Sigmoid colon (tissue), 7 donors: ENCODE measurements at regions of chr12 and their contacts with region 1.

Region 1: DNA sequence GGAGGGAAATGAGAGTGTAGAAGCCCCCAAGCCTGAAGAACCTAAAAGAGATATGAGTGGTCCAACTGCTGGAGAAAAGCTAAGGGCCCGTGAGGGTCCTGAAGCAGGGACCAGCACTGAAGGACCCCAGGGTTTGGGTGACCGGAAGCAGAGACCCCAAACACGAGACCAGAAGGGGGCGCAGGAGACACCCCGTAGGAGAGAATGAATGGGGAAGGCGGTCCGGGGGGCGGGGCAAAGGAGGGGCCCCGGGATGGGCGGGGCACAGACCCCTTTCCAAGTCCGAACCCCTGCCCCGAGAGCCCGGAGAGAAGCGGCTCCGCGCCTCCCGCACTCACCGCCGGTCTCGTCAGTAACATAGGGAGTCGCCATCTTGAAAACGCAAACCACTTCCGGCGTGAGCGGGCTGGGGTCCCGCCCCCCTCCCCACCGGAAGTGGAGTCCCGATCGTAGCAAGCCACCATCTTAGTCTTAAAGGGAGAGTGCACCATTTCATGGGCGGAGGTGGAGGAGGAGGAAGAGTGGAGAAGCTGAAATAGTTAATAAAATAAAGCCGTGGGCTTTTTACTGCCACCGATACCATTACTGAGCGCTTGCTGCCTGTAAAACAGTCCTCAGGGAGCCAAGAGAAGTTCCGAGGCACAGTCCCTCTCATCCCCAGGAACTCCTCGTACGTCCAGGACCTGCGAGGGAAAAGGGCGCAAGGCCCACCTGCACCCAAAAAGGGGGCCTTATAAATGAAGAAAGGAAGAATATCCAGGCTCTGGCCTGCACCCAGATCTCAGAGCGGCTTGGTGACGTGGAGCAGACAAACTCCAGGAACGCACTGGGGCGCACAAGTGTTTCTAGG is 731 bp downstream of the PYM1 start:
- DNase-seq: peak; percentile 94
- H3K4me3 ChIP-seq: peak overlapping the region; percentile 53 to 94 (median 86)
- H3K27ac ChIP-seq: peak overlapping the region; percentile 84 to 98 (median 98)
- H3K4me1 ChIP-seq: peaks cover 0 to 48% (median 38%) of the 10 kb centered on the region in 4 donors
- H3K27me3 ChIP-seq: no peaks in the 10 kb centered on the region
- CTCF ChIP-seq: peak in 3 of 4 experiments; percentile 73 to 87 (median 80)
- EP300 ChIP-seq: no peak
- POLR2A ChIP-seq: peak in 1 of 2 donors; percentile 39

Region 2: GRCh38 chr12:55738123-55739024 is 188.6 kb before region 1 on chr12:
- intact Hi-C with region 1: loop called (anchors 5 kb)
- DNase-seq: peak; percentile 91
- H3K4me3 ChIP-seq: peak overlapping the region; percentile 39 to 62 (median 52)
- H3K27ac ChIP-seq: peak overlapping the region; percentile 78 to 83 (median 80)
- H3K4me1 ChIP-seq: peaks cover 0 to 28% (median 20%) of the 10 kb centered on the region in 4 donors
- H3K27me3 ChIP-seq: no peaks in the 10 kb centered on the region
- CTCF ChIP-seq: peak; percentile 78 to 95 (median 88)
- EP300 ChIP-seq: no peak
- POLR2A ChIP-seq: no peak

Region 3: DNA sequence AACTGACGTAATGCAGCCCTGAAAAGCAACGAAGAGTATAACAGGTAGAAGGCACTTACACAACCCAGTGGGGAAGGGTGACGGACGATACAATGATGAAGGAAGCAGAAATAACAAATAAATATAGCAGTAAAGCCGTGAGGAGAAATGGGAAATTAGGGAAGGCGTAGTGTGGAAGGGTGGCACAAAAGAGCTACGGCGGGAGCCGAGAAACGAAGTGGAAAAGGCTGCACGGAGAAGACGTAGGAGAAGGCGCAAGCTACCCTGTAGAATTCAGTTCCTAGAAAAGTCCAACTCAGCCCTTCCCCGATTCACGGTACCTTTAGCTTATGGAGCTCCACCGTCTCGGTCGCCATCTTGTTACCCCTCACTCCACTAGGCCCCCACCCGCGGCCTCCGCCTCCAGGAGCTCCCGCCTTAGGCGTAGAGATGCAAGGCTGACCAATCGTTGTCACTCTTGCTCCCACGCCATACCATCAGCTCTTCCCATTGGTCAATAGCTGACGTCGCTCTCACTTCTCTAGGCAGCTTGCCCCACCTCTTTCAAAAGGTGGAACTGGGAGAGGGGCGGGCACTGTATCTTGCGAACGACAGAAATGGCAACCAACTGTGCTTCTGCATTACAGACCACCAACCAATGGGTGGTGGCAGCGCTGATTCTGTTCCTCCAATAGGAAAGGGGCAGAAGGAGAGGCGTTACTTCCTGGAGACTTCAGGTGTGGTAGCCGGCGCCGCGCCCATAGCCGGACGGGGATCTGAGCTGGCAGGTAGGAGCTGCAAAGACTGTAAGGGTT is 109.4 kb before region 1 on chr12 and contains the starts of genes ORMDL2 and SARNP:
- intact Hi-C with region 1: loop called (anchors 2 kb)
- DNase-seq: peak; percentile 99
- H3K4me3 ChIP-seq: peak within 1 kb of the TSS; percentile 66 to 87 (median 84)
- H3K27ac ChIP-seq: peak within 1 kb of the TSS; percentile 89 to 96 (median 93)
- H3K4me1 ChIP-seq: peaks cover 0 to 43% (median 39%) of the 10 kb centered on the region in 4 donors
- H3K27me3 ChIP-seq: no peaks in the 10 kb centered on the region
- CTCF ChIP-seq: no peak
- EP300 ChIP-seq: no peak
- POLR2A ChIP-seq: peak; percentile 65 to 73
- total RNA-seq, gene ORMDL2: 9.1 to 18.1 (median 12.0) TPM
- total RNA-seq, gene SARNP: 49.0 to 81.9 (median 76.9) TPM

Region 4: GRCh38 chr12:55829967-55830600 is 96.9 kb before region 1 on chr12:
- intact Hi-C with region 1: loop called (anchors 1 kb)
- DNase-seq: peak; percentile 85
- H3K4me3 ChIP-seq: peak overlapping the region; percentile 64 to 88 (median 84)
- H3K27ac ChIP-seq: peak overlapping the region; percentile 86 to 94 (median 92)
- H3K4me1 ChIP-seq: peaks cover 0 to 54% (median 47%) of the 10 kb centered on the region in 4 donors
- H3K27me3 ChIP-seq: no peaks in the 10 kb centered on the region
- CTCF ChIP-seq: no peak
- EP300 ChIP-seq: no peak
- POLR2A ChIP-seq: no peak

Region 5: GRCh38 chr12:55966408-55967281 is 39.7 kb after region 1 on chr12 and contains the start of gene CDK2:
- intact Hi-C with region 1: loop called (anchors 2 kb)
- DNase-seq: peak; percentile 98
- H3K4me3 ChIP-seq: peak within 1 kb of the TSS; percentile 57 to 94 (median 72)
- H3K27ac ChIP-seq: peak within 1 kb of the TSS; percentile 73 to 89 (median 84)
- H3K4me1 ChIP-seq: peaks cover 0 to 21% (median 15%) of the 10 kb centered on the region in 4 donors
- H3K27me3 ChIP-seq: no peaks in the 10 kb centered on the region
- CTCF ChIP-seq: no peak
- EP300 ChIP-seq: no peak
- POLR2A ChIP-seq: peak; percentile 50 to 55
- total RNA-seq, gene CDK2: 11.4 to 27.7 (median 18.8) TPM

Region 6: DNA sequence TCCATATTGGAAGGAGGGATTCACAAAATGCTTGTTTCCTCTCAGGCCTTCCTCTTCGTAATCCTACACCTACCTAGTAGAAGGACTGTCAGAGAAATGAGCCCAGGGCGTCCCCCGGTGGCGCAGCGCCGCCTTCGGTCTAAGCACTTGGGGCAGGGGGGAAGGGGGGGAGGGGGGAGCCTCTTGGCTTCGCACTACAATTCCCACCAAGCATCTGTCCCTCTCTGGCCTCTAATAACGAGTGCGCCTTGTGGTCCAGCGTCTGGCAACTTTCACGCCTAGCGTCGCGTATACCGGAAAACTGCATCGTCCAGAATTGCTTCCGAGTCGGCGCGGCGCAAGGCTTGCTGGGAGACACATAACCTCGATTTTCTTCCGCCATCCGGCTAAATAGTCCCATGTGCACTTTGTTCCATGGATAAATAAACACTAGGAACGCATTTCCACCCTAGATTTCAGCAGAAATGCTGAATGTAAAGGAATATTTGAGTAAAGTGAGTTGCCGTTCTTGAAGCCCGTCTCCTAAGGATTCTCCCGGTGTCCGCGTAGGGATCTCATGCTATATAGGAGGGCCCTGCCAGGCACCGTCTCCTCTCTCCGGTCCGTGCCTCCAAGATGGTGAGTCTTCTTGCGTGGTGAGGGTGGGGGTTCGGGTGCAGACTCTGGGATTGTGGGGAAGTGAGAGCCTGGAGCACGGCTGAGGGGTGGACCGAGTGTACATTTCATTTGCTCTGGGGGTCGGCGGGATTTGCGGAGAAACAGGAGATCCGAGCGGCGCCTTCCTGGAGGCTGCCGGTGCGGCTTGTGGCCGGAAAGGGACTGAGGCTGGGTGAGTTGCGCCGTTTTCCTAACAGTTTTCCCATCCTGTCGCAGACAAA is 114.8 kb after region 1 on chr12 and contains the start of gene RPS26:
- intact Hi-C with region 1: loop called (anchors 2 kb)
- DNase-seq: peak; percentile 98
- H3K4me3 ChIP-seq: peak within 1 kb of the TSS; percentile 56 to 94 (median 72)
- H3K27ac ChIP-seq: peak within 1 kb of the TSS; percentile 91 to 96 (median 94)
- H3K4me1 ChIP-seq: peaks cover 0 to 20% (median 19%) of the 10 kb centered on the region in 4 donors
- H3K27me3 ChIP-seq: no peaks in the 10 kb centered on the region
- CTCF ChIP-seq: peak in 1 of 4 experiments; percentile 40
- EP300 ChIP-seq: peak in 2 of 4 donors; percentile 32 to 52
- POLR2A ChIP-seq: peak; percentile 97
- total RNA-seq, gene RPS26: 130 to 3,746 (median 1,580) TPM